Spleen (tissue), 13 donors: ENCODE measurements at regions of chr1 and their contacts with region 1.

Region 1: GRCh38 chr1:32939655-32940371 is 24.8 kb downstream of the RNF19B start:
- DNase-seq: no peak
- H3K4me3 ChIP-seq: no peak overlapping the region
- H3K27ac ChIP-seq: peak overlapping the region in 4 of 8 donors; percentile 24 to 53 (median 27)
- H3K4me1 ChIP-seq: peaks cover 0 to 22% (median 7%) of the 10 kb centered on the region in 6 donors
- H3K27me3 ChIP-seq: no peaks in the 10 kb centered on the region
- CTCF ChIP-seq: no peak
- POLR2A ChIP-seq: no peak

Region 2: DNA sequence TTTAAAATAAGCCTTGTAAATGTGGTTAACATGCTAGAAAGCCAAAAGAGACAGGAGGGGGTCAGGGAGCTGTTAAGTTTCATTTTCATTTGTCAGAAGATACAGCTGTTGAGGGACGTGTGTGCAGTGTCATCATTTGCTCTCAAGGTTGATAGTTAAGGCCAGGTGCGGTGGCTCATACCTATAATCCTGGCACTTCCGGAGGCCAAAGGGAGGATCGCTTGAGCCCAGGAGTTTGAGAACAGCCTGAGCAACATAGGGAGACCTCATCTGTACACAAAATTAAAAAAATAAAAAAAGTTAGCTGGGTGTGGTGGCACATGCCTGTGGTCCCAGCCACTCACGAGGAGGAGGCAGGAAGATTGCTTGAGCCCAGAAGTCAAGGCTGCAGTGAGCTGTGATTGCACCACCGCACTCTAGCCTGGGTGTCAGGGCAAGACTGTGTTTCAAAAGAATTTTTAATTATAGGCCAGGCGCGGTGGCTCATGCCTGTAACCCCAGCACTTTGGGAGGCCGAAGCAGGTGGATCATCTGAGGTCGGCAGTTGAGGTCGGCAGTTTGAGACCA is 312.1 kb before region 1 on chr1:
- intact Hi-C with region 1: no loop called
- DNase-seq: no peak
- H3K4me3 ChIP-seq: no peak overlapping the region
- H3K27ac ChIP-seq: peak overlapping the region in 6 of 8 donors; percentile 44 to 75 (median 57)
- H3K4me1 ChIP-seq: peaks cover 0 to 36% (median 7%) of the 10 kb centered on the region in 6 donors
- H3K27me3 ChIP-seq: no peaks in the 10 kb centered on the region
- CTCF ChIP-seq: no peak
- POLR2A ChIP-seq: no peak

Region 3: DNA sequence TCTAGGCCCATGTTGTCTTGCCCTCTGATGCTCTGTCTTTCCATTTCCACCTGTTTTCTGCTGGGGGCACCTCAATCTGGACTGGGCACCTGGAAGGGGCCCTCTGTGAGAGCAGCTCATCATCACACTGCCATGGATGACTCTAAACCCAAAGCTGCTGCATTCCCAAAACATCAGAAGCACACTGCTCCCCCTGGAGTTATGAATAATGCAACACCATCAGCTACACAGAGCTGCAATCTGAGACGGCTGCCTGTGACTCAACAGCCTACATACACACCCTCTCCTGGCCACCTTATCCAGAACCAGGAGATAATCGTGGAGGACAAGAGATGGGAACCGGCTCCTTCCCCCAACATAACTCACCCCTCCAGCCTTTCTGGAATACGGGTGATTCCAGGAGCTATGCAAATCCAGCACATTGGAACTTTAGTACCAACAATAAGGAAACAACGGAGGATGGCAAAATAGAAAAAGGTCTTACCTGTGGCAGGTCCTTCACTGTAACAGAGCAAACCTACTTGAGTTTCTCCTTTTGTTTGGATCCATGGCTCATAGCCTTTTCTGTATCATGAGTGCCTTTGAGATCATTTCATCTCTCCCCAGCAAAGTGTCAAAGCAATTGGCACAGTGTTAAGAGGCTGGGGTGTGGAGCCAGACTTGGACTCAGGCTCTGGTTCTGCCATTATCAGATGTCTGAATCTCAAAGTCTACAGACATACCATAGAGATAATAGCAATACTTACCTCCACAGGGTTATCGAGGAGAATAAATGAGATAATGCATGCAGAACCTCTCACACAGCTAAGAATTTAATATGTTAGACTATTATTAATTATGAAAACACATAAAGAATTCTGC is 67.6 kb after region 1 on chr1:
- intact Hi-C with region 1: loop called (anchors 10 kb)
- DNase-seq: no peak
- H3K4me3 ChIP-seq: no peak overlapping the region
- H3K27ac ChIP-seq: peak overlapping the region in 4 of 8 donors; percentile 45 to 78 (median 74)
- H3K4me1 ChIP-seq: peaks cover 7 to 62% (median 23%) of the 10 kb centered on the region in 6 donors
- H3K27me3 ChIP-seq: no peaks in the 10 kb centered on the region
- CTCF ChIP-seq: peak in 7 of 11 experiments; percentile 21 to 45 (median 33)
- POLR2A ChIP-seq: no peak

Region 4: GRCh38 chr1:33080885-33081553 is 141.2 kb after region 1 on chr1 and contains the start of gene AZIN2:
- intact Hi-C with region 1: loop called (anchors 10 kb)
- DNase-seq: peak; percentile 99
- H3K4me3 ChIP-seq: peak within 1 kb of the TSS; percentile 54 to 88 (median 72)
- H3K27ac ChIP-seq: peak within 1 kb of the TSS in 6 of 8 donors; percentile 27 to 59 (median 48)
- H3K4me1 ChIP-seq: peaks cover 5 to 44% (median 21%) of the 10 kb centered on the region in 6 donors
- H3K27me3 ChIP-seq: peaks cover 0 to 16% (median 5%) of the 10 kb centered on the region in 7 donors
- CTCF ChIP-seq: no peak
- POLR2A ChIP-seq: peak in 2 of 3 donors; percentile 35 to 65
- total RNA-seq, gene AZIN2: 2.8 to 8.3 (median 4.4) TPM